B cell (primary cell): ENCODE measurements at regions of chr2 and their contacts with region 1.

Region 1: GRCh38 chr2:127701193-127701650 is at the start of gene SFT2D3:
- DNase-seq: peak; percentile 95
- ATAC-seq: peak; percentile 74
- H3K4me3 ChIP-seq: peak within 1 kb of the TSS; percentile 69 to 84 (median 77)
- H3K4me3 Mint-ChIP-seq: peak within 1 kb of the TSS; percentile 98
- H3K27ac ChIP-seq: peak within 1 kb of the TSS; percentile 91 to 95
- H3K27ac Mint-ChIP-seq: peak within 1 kb of the TSS; percentile 100
- H3K4me1 ChIP-seq: peaks cover 29% of the 10 kb centered on the region in 2 donors
- H3K4me1 Mint-ChIP-seq: peaks cover 35% of the 10 kb centered on the region
- H3K27me3 ChIP-seq: no peaks in the 10 kb centered on the region
- H3K27me3 Mint-ChIP-seq: no peaks in the 10 kb centered on the region
- CTCF ChIP-seq: no peak
- total RNA-seq, gene SFT2D3: 13.6 and 14.2 TPM in 2 replicates

Region 2: DNA sequence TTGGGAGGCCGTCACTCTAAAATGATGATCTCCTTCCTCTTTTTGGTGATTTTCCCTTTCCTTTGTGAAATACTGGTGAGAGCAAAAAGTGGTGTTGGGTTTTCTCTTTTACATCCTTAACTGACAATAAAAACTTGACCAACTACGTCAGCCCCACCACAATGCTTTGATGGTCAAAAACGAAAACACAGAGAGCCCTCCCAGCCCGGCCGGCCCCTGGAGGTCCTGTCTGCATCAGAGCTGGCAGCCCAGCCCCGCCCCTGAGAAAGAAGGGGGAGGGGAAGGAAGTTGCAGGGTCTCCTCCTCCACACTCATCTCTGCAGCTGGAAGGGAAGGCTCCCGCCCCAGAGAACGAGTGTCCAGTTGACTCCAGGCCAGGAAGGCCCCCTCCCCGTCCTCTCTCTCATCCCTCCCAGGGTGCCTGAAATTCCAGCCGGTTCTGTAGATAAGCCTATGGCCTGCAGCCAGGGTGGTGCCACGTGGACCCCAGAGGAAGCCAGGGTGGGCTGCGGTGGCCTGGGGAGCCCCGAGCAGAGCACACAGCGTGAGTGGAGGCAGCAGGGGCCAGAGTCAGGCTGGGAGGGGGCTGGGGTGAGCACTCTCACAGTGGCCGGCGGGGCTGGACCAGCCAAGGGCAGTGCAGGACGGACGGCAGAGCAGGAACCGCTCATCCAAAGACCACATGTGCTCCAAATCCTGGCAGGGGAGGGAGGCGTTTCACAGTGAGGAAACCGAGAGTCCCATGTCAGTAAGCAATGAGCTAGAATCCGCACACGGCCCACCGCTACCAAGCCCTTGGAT is 614.0 kb before region 1 on chr2:
- CTCF ChIA-PET with region 1: no interaction called
- POLR2A ChIA-PET with region 1: no interaction called
- intact Hi-C with region 1: loop called (anchors 10 kb)
- DNase-seq: peak; percentile 76
- ATAC-seq: peak; percentile 1
- H3K4me3 ChIP-seq: peak overlapping the region in 4 of 5 experiments; percentile 23 to 72 (median 44)
- H3K4me3 Mint-ChIP-seq: peak overlapping the region; percentile 81
- H3K27ac ChIP-seq: peak overlapping the region; percentile 42 to 55
- H3K27ac Mint-ChIP-seq: peak overlapping the region; percentile 90
- H3K4me1 ChIP-seq: peaks cover 53 to 62% of the 10 kb centered on the region in 2 donors
- H3K4me1 Mint-ChIP-seq: peaks cover 61% of the 10 kb centered on the region
- H3K27me3 ChIP-seq: no peaks in the 10 kb centered on the region
- H3K27me3 Mint-ChIP-seq: no peaks in the 10 kb centered on the region
- CTCF ChIP-seq: no peak

Region 3: GRCh38 chr2:127640082-127641072 is 60.8 kb before region 1 on chr2:
- CTCF ChIA-PET with region 1: interaction called, 3 read pairs
- POLR2A ChIA-PET with region 1: no interaction called
- intact Hi-C with region 1: loop called (anchors 5 kb)
- DNase-seq: peak; percentile 82
- ATAC-seq: peak; percentile 83
- H3K4me3 ChIP-seq: no peak overlapping the region
- H3K4me3 Mint-ChIP-seq: peak overlapping the region; percentile 57
- H3K27ac ChIP-seq: peak overlapping the region; percentile 62 to 76
- H3K27ac Mint-ChIP-seq: peak overlapping the region; percentile 95
- H3K4me1 ChIP-seq: peaks cover 69 to 77% of the 10 kb centered on the region in 2 donors
- H3K4me1 Mint-ChIP-seq: peaks cover 68% of the 10 kb centered on the region
- H3K27me3 ChIP-seq: no peaks in the 10 kb centered on the region
- H3K27me3 Mint-ChIP-seq: no peaks in the 10 kb centered on the region
- CTCF ChIP-seq: peak; percentile 29

Region 4: GRCh38 chr2:127721311-127721977 is 20.2 kb after region 1 on chr2:
- CTCF ChIA-PET with region 1: no interaction called
- POLR2A ChIA-PET with region 1: no interaction called
- intact Hi-C with region 1: no loop called
- DNase-seq: no peak
- ATAC-seq: no peak
- H3K4me3 ChIP-seq: no peak overlapping the region
- H3K4me3 Mint-ChIP-seq: no peak overlapping the region
- H3K27ac ChIP-seq: no peak overlapping the region
- H3K27ac Mint-ChIP-seq: no peak overlapping the region
- H3K4me1 ChIP-seq: no peaks in the 10 kb centered on the region
- H3K4me1 Mint-ChIP-seq: no peaks in the 10 kb centered on the region
- H3K27me3 ChIP-seq: no peaks in the 10 kb centered on the region
- H3K27me3 Mint-ChIP-seq: no peaks in the 10 kb centered on the region
- CTCF ChIP-seq: no peak

Region 5: GRCh38 chr2:127753374-127753773 is 52.2 kb after region 1 on chr2:
- CTCF ChIA-PET with region 1: no interaction called
- POLR2A ChIA-PET with region 1: interaction called, 3 read pairs
- intact Hi-C with region 1: loop called (anchors 1 kb)
- DNase-seq: no peak
- ATAC-seq: no peak
- H3K4me3 ChIP-seq: no peak overlapping the region
- H3K4me3 Mint-ChIP-seq: no peak overlapping the region
- H3K27ac ChIP-seq: no peak overlapping the region
- H3K27ac Mint-ChIP-seq: no peak overlapping the region
- H3K4me1 ChIP-seq: peaks cover 13 to 16% of the 10 kb centered on the region in 2 donors
- H3K4me1 Mint-ChIP-seq: peaks cover 19% of the 10 kb centered on the region
- H3K27me3 ChIP-seq: no peaks in the 10 kb centered on the region
- H3K27me3 Mint-ChIP-seq: no peaks in the 10 kb centered on the region
- CTCF ChIP-seq: no peak

Region 6: DNA sequence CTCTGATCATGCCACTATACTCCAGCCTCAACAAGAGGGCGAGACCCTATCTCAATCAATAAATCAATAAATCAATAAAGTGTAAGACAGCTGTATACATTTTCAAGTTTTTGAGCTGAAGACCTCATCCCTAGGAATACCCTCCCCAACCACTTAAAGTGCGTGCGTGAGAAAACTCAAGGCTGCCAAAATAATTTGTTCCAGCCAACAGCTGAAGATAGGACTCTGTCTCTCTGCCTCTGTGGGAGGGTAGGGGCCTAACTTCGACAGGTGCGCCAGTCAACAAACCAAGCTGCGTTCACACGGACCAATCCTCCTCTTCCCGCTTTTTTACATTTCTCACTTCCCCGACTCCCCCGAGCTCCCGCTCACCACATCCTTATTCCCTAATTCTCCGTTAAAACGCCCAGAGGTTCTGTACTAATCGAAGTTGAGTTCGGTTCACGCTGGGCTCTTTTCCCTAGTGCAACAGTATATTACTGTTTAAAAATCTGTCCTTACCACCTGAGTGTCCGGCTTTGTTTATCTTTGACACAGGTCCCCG is 156.1 kb after region 1 on chr2:
- CTCF ChIA-PET with region 1: no interaction called
- POLR2A ChIA-PET with region 1: no interaction called
- intact Hi-C with region 1: loop called (anchors 1 kb)
- DNase-seq: no peak
- ATAC-seq: no peak
- H3K4me3 ChIP-seq: peak overlapping the region; percentile 68 to 87 (median 80)
- H3K4me3 Mint-ChIP-seq: peak overlapping the region; percentile 88
- H3K27ac ChIP-seq: peak overlapping the region; percentile 41 to 85
- H3K27ac Mint-ChIP-seq: peak overlapping the region; percentile 57
- H3K4me1 ChIP-seq: peaks cover 16 to 36% of the 10 kb centered on the region in 2 donors
- H3K4me1 Mint-ChIP-seq: peaks cover 46% of the 10 kb centered on the region
- H3K27me3 ChIP-seq: no peaks in the 10 kb centered on the region
- H3K27me3 Mint-ChIP-seq: no peaks in the 10 kb centered on the region
- CTCF ChIP-seq: no peak

Region 7: DNA sequence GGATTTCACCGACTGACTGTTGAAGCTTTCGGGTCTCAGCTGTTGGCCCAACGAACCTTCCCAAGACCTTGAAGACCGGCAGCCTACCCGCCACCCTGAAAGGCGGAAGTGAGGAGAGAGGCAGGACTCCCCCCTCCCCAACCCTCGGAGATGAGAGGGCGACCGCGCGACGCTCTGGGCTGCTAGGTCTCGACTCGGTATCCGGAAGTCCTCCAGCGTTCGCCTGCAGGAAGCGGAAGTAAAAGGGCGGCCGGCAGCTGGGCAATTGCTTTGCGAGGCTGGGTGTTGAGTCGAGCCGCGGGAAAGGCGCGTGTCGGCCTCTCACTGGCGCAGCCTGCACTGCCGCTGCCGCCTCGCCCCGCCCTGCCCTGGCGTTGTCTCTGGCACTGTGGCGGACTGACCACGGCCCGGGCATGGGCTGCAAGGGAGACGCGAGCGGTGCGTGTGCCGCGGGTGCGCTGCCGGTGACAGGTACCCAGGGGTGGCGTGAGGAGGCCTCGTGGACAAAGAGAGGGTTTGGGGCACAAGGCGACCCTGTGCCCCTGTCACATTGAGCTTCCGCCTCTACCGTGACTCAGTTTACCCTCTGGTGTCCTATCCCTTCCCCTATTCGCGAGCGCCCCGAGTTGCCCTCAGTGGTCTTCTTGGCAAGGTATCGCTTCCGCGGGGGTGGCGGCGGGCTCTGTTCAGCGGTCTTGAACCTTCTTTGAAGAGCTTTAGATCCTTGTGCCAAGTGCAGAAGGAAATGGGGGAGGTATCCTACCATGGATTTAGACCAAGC is 389.9 kb after region 1 on chr2 and contains the start of gene UGGT1:
- CTCF ChIA-PET with region 1: no interaction called
- POLR2A ChIA-PET with region 1: no interaction called
- intact Hi-C with region 1: loop called (anchors 2 kb)
- DNase-seq: peak; percentile 98
- ATAC-seq: peak; percentile 97
- H3K4me3 ChIP-seq: peak within 1 kb of the TSS; percentile 73 to 93 (median 79)
- H3K4me3 Mint-ChIP-seq: peak within 1 kb of the TSS; percentile 92
- H3K27ac ChIP-seq: peak within 1 kb of the TSS; percentile 57 to 78
- H3K27ac Mint-ChIP-seq: peak within 1 kb of the TSS; percentile 92
- H3K4me1 ChIP-seq: peaks cover 12 to 18% of the 10 kb centered on the region in 2 donors
- H3K4me1 Mint-ChIP-seq: peaks cover 42% of the 10 kb centered on the region
- H3K27me3 ChIP-seq: no peaks in the 10 kb centered on the region
- H3K27me3 Mint-ChIP-seq: no peaks in the 10 kb centered on the region
- CTCF ChIP-seq: no peak
- total RNA-seq, gene UGGT1: 42.1 and 44.1 TPM in 2 replicates